ENCODE measurements at regions of chr15 and their contacts with region 1.

Region 1: GRCh38 chr15:28123408-28124023 is 24.4 kb upstream of the OCA2 start:
- DNase-seq: peak; percentile 61
- H3K4me3 Mint-ChIP-seq: no peak overlapping the region
- H3K27ac Mint-ChIP-seq: no peak overlapping the region
- H3K4me1 Mint-ChIP-seq: no peaks in the 10 kb centered on the region
- H3K27me3 Mint-ChIP-seq: no peaks in the 10 kb centered on the region

Region 2: GRCh38 chr15:27885201-27885600 is 238.3 kb before region 1 on chr15:
- CTCF ChIA-PET with region 1: no interaction called
- POLR2A ChIA-PET with region 1: no interaction called
- intact Hi-C with region 1: no loop called
- DNase-seq: no peak
- H3K4me3 Mint-ChIP-seq: no peak overlapping the region
- H3K27ac Mint-ChIP-seq: no peak overlapping the region
- H3K4me1 Mint-ChIP-seq: no peaks in the 10 kb centered on the region
- H3K27me3 Mint-ChIP-seq: peaks cover 2% of the 10 kb centered on the region

Region 3: DNA sequence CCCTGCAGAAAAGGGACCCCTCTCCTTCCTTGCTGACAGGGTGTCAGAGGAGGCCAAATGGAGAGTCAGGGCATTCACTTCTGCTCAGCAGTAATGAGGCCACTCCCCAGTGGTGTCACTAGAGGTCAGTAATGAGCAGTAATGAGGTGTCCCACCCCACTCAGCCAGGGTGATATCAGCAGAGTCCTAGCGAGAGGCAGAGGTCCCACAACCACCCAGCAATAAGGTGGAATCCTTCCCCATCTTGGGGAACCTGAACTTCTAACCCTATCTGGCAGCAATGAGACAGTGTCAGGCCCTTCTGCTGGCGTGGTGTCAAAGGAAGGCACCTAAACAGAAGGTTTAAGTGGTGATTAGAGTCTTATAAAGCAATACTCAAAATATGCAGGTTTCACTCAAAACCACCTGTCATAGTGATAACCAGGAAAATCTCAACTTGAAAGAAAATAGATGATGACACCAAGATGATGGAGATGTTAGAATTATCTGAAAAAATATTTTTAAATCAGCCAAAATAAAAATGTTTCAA is 37.3 kb before region 1 on chr15:
- CTCF ChIA-PET with region 1: interaction called, 3 read pairs
- POLR2A ChIA-PET with region 1: no interaction called
- intact Hi-C with region 1: loop called (anchors 1 kb)
- DNase-seq: peak; percentile 61
- H3K4me3 Mint-ChIP-seq: no peak overlapping the region
- H3K27ac Mint-ChIP-seq: no peak overlapping the region
- H3K4me1 Mint-ChIP-seq: no peaks in the 10 kb centered on the region
- H3K27me3 Mint-ChIP-seq: peaks cover 40% of the 10 kb centered on the region

Region 4: DNA sequence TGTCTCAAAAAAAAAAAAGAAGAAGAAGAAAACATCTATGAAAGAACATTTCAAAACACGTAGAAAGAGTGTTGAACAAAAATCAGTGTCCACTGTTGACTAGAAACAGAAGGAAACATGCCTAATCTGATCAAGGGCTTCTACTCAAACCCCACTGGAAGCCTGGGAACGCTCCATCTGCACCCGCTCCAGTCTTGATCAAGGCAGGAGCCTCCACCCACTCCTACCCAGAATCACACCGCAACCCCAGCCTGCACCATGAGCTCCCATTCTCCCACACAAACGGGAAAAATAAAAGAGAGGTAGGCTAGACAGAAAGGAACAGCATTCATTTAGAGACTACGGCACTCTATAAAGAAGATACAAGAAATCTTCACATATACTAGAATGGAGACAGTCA is 16.5 kb after region 1 on chr15:
- CTCF ChIA-PET with region 1: interaction called, 14 read pairs
- POLR2A ChIA-PET with region 1: no interaction called
- intact Hi-C with region 1: no loop called
- DNase-seq: no peak
- H3K4me3 Mint-ChIP-seq: no peak overlapping the region
- H3K27ac Mint-ChIP-seq: no peak overlapping the region
- H3K4me1 Mint-ChIP-seq: peaks cover 35% of the 10 kb centered on the region
- H3K27me3 Mint-ChIP-seq: no peaks in the 10 kb centered on the region